Activated CD4-positive, alpha-beta T cell treated with anti-CD3 and anti-CD28 coated beads for 36 hours (primary cell): ENCODE measurements at regions of chr1 and their contacts with region 1.

Region 1: DNA sequence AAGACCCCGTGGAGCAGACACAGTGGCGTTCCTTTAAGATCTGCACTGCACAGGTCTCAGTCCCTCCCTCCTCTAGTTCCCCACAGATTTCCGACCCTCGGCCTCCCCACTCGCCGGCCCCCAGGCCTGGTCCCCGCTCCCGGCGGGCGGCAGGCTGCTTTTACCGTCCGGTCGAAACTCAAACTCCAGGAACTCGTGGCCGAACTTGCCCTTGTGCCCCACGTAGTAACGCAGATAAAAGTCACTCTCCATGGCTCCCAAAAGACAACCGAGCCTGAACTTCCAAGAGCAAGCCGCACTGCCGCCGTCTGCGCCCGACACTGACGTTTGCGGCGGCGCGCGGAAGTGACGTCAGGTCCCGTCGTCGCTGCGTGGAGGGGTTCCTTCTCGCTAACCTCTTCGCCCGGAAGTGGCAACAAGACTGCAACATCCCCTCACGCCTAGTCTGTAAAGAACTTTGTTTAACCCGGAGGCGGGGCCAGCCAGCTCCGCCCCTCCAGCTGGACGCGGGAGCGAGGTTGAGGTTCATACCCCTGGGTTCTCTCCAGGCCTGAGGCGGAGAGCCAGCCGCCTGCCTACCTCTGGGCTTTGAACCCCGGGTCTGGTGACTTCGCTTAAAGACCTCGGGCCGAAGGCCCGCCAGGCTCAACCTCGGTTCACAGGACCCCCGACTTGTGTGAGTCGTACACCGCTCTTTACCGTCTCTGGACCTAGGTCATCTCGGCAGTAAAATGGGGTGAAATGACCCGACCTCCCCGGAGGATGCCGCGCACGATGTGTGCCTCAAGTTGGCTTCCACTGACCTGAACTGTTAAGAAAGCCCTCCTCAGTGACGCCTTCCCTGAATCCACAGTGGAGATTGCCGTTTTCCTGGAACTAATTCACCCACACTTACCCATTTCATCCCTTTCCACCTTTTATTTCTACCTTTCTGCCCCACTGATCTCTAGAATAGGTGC is at the start of gene MAGOH:
- DNase-seq: peak; percentile 95
- ATAC-seq: peak; percentile 98
- H3K4me3 Mint-ChIP-seq: peak within 1 kb of the TSS; percentile 96
- H3K27ac Mint-ChIP-seq: peak within 1 kb of the TSS; percentile 93
- H3K4me1 Mint-ChIP-seq: peaks cover 24% of the 10 kb centered on the region
- H3K27me3 Mint-ChIP-seq: no peaks in the 10 kb centered on the region
- total RNA-seq, gene MAGOH: 73.7 to 92.3 TPM

Region 2: GRCh38 chr1:52842643-52843309 is 395.7 kb before region 1 on chr1 and contains the start of gene ZYG11A:
- CTCF ChIA-PET with region 1: no interaction called
- POLR2A ChIA-PET with region 1: no interaction called
- intact Hi-C with region 1: loop called in 1 of 2 experiments (anchors 1 kb)
- DNase-seq: peak; percentile 89
- ATAC-seq: peak; percentile 98
- H3K4me3 Mint-ChIP-seq: peak within 1 kb of the TSS; percentile 58
- H3K27ac Mint-ChIP-seq: no peak within 1 kb of the TSS
- H3K4me1 Mint-ChIP-seq: peaks cover 5% of the 10 kb centered on the region
- H3K27me3 Mint-ChIP-seq: peaks cover 18% of the 10 kb centered on the region
- total RNA-seq, gene ZYG11A: 0.11 to 0.25 TPM

Region 3: DNA sequence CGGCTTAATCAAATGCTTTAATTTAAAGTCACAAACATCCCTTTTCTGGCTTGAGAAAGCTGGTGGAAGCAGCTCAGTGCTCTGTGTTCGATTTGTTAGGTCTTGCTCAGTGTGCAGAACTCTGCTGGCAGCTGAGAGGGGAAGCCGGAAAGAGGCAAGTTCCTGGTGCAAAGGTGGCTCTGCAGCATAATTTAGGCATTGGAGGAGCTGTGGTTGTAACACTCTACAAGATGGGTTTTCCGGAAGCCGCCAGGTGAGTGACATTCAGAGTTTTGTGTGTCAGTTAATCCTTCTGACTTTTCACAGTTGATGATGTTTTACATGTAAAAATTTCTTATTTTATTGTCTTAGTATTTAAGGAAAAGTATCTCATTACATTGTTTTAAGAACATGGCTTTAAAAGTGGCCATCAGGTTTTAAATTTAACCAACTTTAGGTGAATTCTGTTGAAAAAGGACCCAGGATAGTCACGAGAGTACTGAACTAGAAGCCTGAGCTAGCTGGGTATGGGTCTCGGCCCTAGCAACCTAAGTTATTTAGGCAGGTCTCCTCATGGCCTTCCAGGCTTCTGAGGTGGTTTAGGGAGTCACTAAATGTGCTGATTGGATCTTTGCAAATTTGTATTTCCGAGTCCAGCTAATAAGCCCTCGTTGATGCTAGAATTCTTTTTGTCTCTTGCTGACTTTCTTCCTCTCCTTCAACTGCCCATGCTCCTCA is 223.5 kb before region 1 on chr1:
- CTCF ChIA-PET with region 1: no interaction called
- POLR2A ChIA-PET with region 1: no interaction called
- intact Hi-C with region 1: loop called in 1 of 2 experiments (anchors 1 kb)
- DNase-seq: peak; percentile 84
- ATAC-seq: peak; percentile 99
- H3K4me3 Mint-ChIP-seq: peak overlapping the region; percentile 79
- H3K27ac Mint-ChIP-seq: peak overlapping the region; percentile 89
- H3K4me1 Mint-ChIP-seq: peaks cover 24% of the 10 kb centered on the region
- H3K27me3 Mint-ChIP-seq: no peaks in the 10 kb centered on the region